CD14-positive monocyte (primary cell): ENCODE measurements at regions of chr20 and their contacts with region 1.

Region 1: DNA sequence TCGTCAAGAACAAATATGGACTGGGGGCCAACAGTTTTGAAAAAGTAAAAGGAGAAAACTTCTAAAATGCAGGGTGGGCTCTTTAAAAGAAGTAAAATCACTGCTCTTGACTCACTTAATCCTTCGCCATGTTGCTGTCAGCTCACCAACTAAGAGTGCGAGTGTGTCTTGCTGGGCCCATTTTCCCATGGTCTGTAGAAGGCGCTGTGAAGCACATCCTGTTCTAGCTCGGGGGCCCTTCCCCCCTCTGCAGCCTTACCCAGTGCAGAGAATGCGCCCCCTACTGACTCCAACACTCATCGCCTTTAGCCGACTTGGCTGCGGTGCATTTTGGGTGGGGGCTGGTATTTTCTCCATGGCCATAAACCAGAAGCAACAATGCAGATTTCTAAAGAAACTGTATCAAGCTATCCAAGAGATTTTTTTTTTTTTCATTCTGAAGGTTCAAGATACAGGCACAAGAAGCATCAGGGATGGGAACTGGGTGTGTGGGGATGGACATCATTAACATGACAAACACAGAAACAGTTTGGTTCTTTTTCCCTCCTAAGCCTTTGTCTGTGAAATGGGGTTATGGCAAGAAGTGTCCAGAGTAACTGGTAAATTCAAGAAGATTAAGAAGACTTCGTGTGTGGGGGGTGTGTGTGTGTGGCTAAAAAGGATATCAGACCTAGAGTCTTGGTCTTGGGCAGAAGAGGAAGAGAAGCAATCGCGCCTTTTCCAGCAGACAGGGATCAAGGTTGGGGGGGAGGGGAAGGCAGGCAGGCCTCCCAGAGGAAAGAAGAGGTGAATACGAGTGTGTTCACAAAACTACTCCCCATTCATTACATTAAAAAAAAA is 1.7 kb downstream of the ADNP start:
- DNase-seq: peak; percentile 84 to 91 (median 91)
- H3K4me3 ChIP-seq: peak overlapping the region; percentile 65 to 95 (median 83)
- H3K4me3 Mint-ChIP-seq: peak overlapping the region; percentile 87 to 90
- H3K27ac ChIP-seq: peak overlapping the region; percentile 3 to 66
- H3K27ac Mint-ChIP-seq: peak overlapping the region; percentile 84 to 96 (median 92)
- H3K4me1 ChIP-seq: peaks cover 23 to 43% of the 10 kb centered on the region in 2 donors
- H3K4me1 Mint-ChIP-seq: peaks cover 44% of the 10 kb centered on the region
- H3K27me3 ChIP-seq: no peaks in the 10 kb centered on the region
- H3K27me3 Mint-ChIP-seq: no peaks in the 10 kb centered on the region
- CTCF ChIP-seq: peak; percentile 93

Region 2: DNA sequence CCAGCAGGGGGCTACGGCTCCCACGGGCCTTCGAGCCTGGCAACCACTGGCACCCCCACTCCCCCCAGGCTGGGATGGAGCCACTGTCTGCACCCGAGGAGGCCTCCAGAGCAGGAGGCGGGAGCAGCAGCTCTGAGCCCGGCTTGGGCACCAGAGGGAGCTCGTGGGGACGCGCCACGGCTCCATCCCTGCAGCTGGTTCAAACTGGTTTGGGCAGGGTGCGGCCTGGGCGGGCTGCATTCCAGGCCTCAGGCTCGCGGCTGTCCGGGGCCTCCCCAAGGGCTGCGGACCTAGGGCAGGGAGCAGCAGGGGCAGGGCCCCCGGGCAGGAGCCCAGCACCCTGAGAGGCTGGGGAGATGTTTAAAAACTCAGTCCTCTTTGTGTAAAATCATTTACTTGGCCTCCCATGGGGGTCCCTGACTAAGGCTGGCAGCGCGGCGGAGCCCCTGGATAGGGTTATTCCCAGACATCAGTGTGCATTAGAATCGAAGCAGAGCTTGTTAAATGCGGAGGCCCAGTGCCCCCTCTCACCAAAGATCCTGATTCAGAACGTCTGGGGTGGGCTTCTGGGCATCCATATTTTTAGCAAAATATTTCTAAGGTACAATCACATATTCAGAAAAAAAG is 138.8 kb before region 1 on chr20:
- intact Hi-C with region 1: loop called (anchors 5 to 10 kb)
- DNase-seq: peak; percentile 49 to 58 (median 55)
- H3K4me3 ChIP-seq: peak overlapping the region in 1 of 3 experiments; percentile 52
- H3K4me3 Mint-ChIP-seq: peak overlapping the region in 1 of 2 donors; percentile 31
- H3K27ac ChIP-seq: no peak overlapping the region
- H3K27ac Mint-ChIP-seq: peak overlapping the region in 2 of 7 donors; percentile 46 to 73
- H3K4me1 ChIP-seq: peaks cover 30 to 40% of the 10 kb centered on the region in 2 donors
- H3K4me1 Mint-ChIP-seq: peaks cover 27% of the 10 kb centered on the region
- H3K27me3 ChIP-seq: peaks cover 7 to 8% of the 10 kb centered on the region in 2 donors
- H3K27me3 Mint-ChIP-seq: peaks cover 4 to 20% (median 8%) of the 10 kb centered on the region in 3 donors
- CTCF ChIP-seq: peak; percentile 67

Region 3: GRCh38 chr20:50824193-50824632 is 105.3 kb before region 1 on chr20:
- intact Hi-C with region 1: loop called in 1 of 2 experiments (anchors 10 kb)
- DNase-seq: no peak
- H3K4me3 ChIP-seq: no peak overlapping the region
- H3K4me3 Mint-ChIP-seq: no peak overlapping the region
- H3K27ac ChIP-seq: no peak overlapping the region
- H3K27ac Mint-ChIP-seq: no peak overlapping the region
- H3K4me1 ChIP-seq: no peaks in the 10 kb centered on the region
- H3K4me1 Mint-ChIP-seq: peaks cover 5% of the 10 kb centered on the region
- H3K27me3 ChIP-seq: no peaks in the 10 kb centered on the region
- H3K27me3 Mint-ChIP-seq: peaks cover 0 to 1% (median 0%) of the 10 kb centered on the region in 3 donors
- CTCF ChIP-seq: no peak

Region 4: DNA sequence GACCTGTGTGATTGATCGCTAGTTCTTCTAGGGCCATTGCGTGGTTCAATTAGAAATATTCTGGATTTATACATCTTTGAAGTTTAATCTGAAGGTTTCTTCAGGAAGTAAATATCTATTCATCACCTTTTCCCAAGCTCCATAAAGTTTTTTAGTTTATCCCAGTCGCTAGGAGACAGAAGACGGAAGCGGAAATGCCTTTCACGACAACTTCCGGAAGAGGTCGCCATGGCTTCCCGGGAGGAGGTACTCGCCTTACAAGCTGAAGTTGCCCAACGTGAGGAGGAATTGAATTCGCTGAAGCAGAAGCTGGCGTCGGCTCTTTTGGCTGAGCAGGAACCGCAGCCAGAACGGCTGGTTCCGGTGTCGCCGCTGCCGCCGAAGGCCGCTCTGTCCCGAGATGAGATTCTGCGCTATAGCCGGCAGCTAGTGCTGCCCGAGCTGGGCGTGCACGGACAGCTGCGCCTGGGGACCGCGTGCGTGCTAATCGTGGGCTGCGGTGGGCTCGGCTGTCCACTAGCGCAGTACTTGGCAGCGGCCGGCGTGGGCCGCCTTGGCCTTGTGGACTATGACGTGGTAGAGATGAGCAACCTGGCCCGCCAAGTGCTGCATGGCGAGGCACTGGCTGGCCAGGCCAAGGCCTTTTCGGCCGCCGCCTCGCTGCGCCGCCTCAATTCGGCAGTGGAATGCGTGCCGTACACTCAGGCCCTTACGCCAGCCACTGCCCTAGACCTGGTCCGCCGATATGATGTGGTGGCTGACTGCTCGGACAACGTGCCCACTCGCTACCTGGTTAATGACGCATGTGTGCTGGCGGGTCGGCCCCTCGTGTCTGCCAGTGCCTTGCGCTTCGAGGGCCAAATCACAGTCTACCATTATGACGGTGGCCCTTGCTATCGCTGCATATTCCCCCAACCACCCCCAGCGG is 29.4 kb after region 1 on chr20 and contains the start of gene MOCS3:
- intact Hi-C with region 1: loop called (anchors 1 kb)
- DNase-seq: peak; percentile 97 to 99 (median 98)
- H3K4me3 ChIP-seq: peak within 1 kb of the TSS; percentile 75 to 92 (median 87)
- H3K4me3 Mint-ChIP-seq: peak within 1 kb of the TSS; percentile 93 to 98
- H3K27ac ChIP-seq: peak within 1 kb of the TSS; percentile 91 to 95
- H3K27ac Mint-ChIP-seq: peak within 1 kb of the TSS; percentile 98 to 99 (median 99)
- H3K4me1 ChIP-seq: peaks cover 27 to 30% of the 10 kb centered on the region in 2 donors
- H3K4me1 Mint-ChIP-seq: peaks cover 39% of the 10 kb centered on the region
- H3K27me3 ChIP-seq: no peaks in the 10 kb centered on the region
- H3K27me3 Mint-ChIP-seq: peaks cover 0 to 3% (median 0%) of the 10 kb centered on the region in 3 donors
- CTCF ChIP-seq: no peak
- polyA plus RNA-seq, gene MOCS3: 0.48 to 1.9 (median 1.9) TPM